ENCODE measurements at regions of chrX and their contacts with region 1.

Region 1: GRCh38 chrX:136880452-136881013 is at the start of gene RBMX:
- DNase-seq: peak; percentile 93
- H3K4me3 ChIP-seq: peak within 1 kb of the TSS; percentile 99
- H3K27ac ChIP-seq: peak within 1 kb of the TSS; percentile 79
- H3K4me1 ChIP-seq: peaks cover 11% of the 10 kb centered on the region
- CTCF ChIP-seq: no peak
- total RNA-seq, gene RBMX: 321 and 394 TPM in 2 replicates

Region 2: GRCh38 chrX:136711147-136711546 is 169.4 kb before region 1 on chrX:
- CTCF ChIA-PET with region 1: no interaction called
- POLR2A ChIA-PET with region 1: no interaction called
- intact Hi-C with region 1: no loop called
- DNase-seq: peak; percentile 7
- H3K4me3 ChIP-seq: no peak overlapping the region
- H3K27ac ChIP-seq: no peak overlapping the region
- H3K4me1 ChIP-seq: peaks cover 26% of the 10 kb centered on the region
- CTCF ChIP-seq: peak; percentile 57

Region 3: GRCh38 chrX:136892412-136892811 is 11.9 kb after region 1 on chrX:
- CTCF ChIA-PET with region 1: no interaction called
- POLR2A ChIA-PET with region 1: interaction called, 16 read pairs
- intact Hi-C with region 1: no loop called
- DNase-seq: no peak
- H3K4me3 ChIP-seq: no peak overlapping the region
- H3K27ac ChIP-seq: no peak overlapping the region
- H3K4me1 ChIP-seq: peaks cover 5% of the 10 kb centered on the region
- CTCF ChIP-seq: no peak

Region 4: DNA sequence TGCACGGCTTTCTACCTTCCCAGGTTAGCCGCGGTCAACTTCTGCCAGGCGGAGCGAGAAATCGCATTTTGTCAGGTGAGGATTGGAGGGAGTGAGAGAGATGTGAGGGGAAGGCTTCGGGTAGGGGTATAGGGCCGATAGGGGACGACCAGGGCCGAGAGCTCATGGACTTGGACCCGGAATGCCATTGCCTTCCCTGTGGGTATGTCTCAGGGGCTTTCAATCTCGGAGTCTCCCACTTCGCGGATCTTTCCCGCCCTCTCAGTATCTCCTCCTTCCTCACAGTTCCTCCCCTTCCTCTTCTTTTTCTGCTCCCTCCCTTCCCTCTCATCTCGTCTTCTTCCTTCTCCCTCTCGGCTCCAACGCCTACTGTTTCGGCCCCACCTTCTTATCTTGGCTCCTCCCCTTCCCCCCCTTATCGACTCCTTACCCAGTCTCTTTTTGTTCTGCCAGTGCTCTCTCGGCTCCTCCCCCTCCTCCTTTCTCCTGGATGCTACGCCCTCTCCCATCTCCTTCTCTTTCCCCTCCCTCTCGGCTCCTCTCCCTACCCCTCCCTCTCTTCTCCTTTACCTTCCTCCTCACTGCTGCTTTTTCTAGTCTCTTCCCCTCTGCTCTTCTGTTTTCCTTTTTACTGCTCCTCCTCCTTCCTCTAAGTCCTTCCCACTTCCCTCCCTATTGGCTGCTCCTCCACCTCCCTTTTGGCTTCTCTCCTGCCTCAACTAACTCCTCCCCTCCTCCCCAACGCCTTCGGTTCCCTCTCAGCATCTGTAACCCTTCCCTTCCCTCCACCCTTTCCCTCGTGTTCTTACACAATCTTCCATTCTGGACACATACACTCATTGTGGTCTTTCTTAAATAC is 29.4 kb after region 1 on chrX:
- CTCF ChIA-PET with region 1: no interaction called
- POLR2A ChIA-PET with region 1: interaction called, 8 read pairs
- intact Hi-C with region 1: loop called (anchors 2 kb)
- DNase-seq: peak; percentile 65
- H3K4me3 ChIP-seq: peak overlapping the region; percentile 88
- H3K27ac ChIP-seq: peak overlapping the region; percentile 66
- H3K4me1 ChIP-seq: peaks cover 24% of the 10 kb centered on the region
- CTCF ChIP-seq: no peak

Measured in OCI-LY7 (cell line).